Sigmoid colon (tissue), 7 donors: ENCODE measurements at regions of chr11 and their contacts with region 1.

Region 1: GRCh38 chr11:73288873-73289707 is 17.0 kb downstream of the P2RY6 start:
- DNase-seq: peak; percentile 85
- H3K4me3 ChIP-seq: peak overlapping the region in 3 of 4 donors; percentile 11 to 27 (median 18)
- H3K27ac ChIP-seq: peak overlapping the region; percentile 33 to 65 (median 44)
- H3K4me1 ChIP-seq: peaks cover 0 to 18% (median 9%) of the 10 kb centered on the region in 4 donors
- H3K27me3 ChIP-seq: no peaks in the 10 kb centered on the region
- CTCF ChIP-seq: peak; percentile 75 to 89 (median 84)
- EP300 ChIP-seq: no peak
- POLR2A ChIP-seq: no peak

Region 2: GRCh38 chr11:72831513-72832300 is 457.4 kb before region 1 on chr11:
- intact Hi-C with region 1: loop called (anchors 5 kb)
- DNase-seq: peak; percentile 93
- H3K4me3 ChIP-seq: no peak overlapping the region
- H3K27ac ChIP-seq: peak overlapping the region in 3 of 4 donors; percentile 8 to 71 (median 15)
- H3K4me1 ChIP-seq: peaks cover 0 to 52% (median 24%) of the 10 kb centered on the region in 4 donors
- H3K27me3 ChIP-seq: no peaks in the 10 kb centered on the region
- CTCF ChIP-seq: peak; percentile 91 to 96 (median 95)
- EP300 ChIP-seq: no peak
- POLR2A ChIP-seq: no peak

Region 3: DNA sequence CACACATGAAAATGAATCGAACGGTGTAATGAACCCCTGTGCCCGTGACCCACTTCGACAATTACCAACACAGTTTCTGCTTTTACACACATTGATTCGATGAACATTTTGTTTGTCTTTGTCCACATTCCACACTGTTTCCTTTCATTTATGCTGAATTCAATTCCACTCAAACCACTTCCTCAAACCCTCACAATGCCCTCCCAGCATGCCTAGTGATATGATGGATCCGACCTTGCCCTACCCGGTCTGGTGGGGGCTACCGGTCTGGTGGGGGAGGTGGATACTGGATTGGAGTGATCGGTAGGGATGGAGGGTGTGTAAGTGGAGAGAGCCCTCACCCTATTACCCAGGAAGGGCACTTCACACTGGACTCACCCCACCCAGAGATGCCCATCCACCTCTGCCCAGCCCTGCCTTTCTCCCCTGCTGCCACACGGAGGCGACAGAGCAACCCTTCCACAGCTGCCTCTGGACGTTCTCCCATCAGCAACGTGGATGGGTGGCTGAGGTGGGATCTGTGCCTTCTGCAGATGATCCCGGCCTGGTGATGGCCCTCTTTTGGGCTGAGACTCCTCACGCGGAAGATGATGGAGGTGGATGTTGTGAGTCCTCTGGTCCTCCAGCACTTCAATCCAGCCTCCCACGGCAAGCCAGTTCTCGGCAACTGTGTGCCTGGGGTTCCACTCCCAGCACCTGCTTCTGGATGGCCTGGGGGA is 104.0 kb before region 1 on chr11:
- intact Hi-C with region 1: loop called (anchors 2 kb)
- DNase-seq: peak; percentile 71
- H3K4me3 ChIP-seq: no peak overlapping the region
- H3K27ac ChIP-seq: no peak overlapping the region
- H3K4me1 ChIP-seq: peaks cover 0 to 10% (median 5%) of the 10 kb centered on the region in 4 donors
- H3K27me3 ChIP-seq: no peaks in the 10 kb centered on the region
- CTCF ChIP-seq: peak; percentile 64 to 83 (median 79)
- EP300 ChIP-seq: no peak
- POLR2A ChIP-seq: no peak

Region 4: DNA sequence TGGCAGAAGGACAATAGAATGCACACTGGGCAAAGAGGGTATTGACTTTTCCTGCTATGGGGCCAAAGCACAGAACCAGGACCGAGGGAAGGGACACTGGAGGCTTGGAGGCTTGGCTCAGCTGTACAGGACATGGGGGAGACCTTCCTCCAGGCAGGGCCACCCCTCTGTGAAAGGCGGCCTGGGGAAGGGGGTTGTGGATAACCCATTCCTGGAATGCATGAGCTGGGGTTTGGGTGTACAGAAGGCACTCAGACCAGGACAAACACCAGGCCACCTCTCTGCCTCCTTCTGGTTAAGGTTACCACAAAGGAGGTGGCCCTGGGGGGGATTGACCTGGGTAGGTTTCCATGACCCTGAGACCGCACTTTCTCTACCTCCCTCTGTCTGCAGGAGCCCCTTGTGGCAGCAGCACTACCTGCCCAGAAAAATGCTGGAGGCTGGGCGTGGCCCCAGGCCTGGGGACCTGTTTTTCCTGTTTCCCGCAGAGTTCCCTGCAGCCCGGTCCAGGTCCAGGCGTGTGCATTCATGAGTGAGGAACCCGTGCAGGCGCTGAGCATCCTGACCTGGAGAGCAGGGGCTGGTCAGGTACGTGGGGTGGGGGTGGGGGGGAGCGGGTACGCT is 61.4 kb before region 1 on chr11:
- intact Hi-C with region 1: no loop called
- DNase-seq: peak; percentile 44
- H3K4me3 ChIP-seq: no peak overlapping the region
- H3K27ac ChIP-seq: no peak overlapping the region
- H3K4me1 ChIP-seq: no peaks in the 10 kb centered on the region
- H3K27me3 ChIP-seq: no peaks in the 10 kb centered on the region
- CTCF ChIP-seq: peak in 1 of 4 experiments; percentile 14
- EP300 ChIP-seq: no peak
- POLR2A ChIP-seq: no peak